Mammary epithelial cell (primary cell): ENCODE measurements at regions of chrX and their contacts with region 1.

Region 1: GRCh38 chrX:18931972-18932371 is 51.9 kb downstream of the PHKA2 start:
- DNase-seq: no peak
- H3K4me3 ChIP-seq: no peak overlapping the region
- H3K27ac ChIP-seq: no peak overlapping the region
- H3K4me1 ChIP-seq: no peaks in the 10 kb centered on the region
- H3K27me3 ChIP-seq: no peaks in the 10 kb centered on the region
- CTCF ChIP-seq: peak; percentile 16 to 21

Region 2: GRCh38 chrX:18963992-18964391 is 32.0 kb after region 1 on chrX:
- CTCF ChIA-PET with region 1: no interaction called
- dilution Hi-C with region 1: no loop called
- in situ Hi-C with region 1: no loop called
- intact Hi-C with region 1: no loop called
- DNase-seq: peak; percentile 8
- H3K4me3 ChIP-seq: no peak overlapping the region
- H3K27ac ChIP-seq: no peak overlapping the region
- H3K4me1 ChIP-seq: no peaks in the 10 kb centered on the region
- H3K27me3 ChIP-seq: no peaks in the 10 kb centered on the region
- CTCF ChIP-seq: no peak

Region 3: DNA sequence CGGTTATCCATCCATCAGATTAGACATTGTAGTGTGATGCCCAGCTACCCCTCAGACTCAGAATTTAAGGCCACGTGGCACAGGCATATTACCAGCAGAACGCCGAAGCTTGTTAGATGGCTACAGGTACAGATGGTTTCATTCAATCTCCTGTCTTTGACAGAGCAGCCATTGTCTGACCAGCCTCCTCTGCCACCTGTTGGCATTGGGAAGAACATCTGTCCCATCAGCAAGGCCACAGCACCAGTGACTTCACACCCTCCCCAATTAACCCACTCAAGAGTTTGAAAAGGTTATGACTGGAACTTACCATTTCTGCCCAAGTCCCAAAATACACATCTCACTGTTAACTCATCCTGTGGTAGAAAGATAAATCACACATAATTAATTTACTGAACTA is 73.9 kb after region 1 on chrX:
- CTCF ChIA-PET with region 1: no interaction called
- dilution Hi-C with region 1: no loop called
- in situ Hi-C with region 1: no loop called
- intact Hi-C with region 1: loop called (anchors 1 kb)
- DNase-seq: no peak
- H3K4me3 ChIP-seq: no peak overlapping the region
- H3K27ac ChIP-seq: no peak overlapping the region
- H3K4me1 ChIP-seq: no peaks in the 10 kb centered on the region
- H3K27me3 ChIP-seq: no peaks in the 10 kb centered on the region
- CTCF ChIP-seq: peak in 1 of 2 donors; percentile 45

Region 4: DNA sequence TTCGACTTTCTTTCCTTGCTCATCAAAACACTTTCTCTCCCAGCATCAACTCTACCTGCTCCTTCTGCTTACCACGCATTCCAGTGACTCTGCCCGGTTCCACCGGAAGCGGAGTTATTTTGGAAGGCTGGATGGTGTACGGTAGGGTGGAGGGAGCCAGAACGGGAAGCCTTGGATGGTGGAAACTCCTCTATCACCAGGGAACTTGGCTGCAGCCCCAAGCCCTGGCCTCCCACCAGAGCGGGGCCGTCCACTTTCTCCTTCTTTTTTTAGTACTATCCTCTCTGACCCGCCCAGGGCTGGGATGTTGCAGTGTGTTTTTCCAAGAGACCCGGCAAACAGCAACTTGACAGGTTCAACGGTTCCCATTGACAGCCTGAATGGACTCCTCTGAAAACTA is 162.7 kb after region 1 on chrX:
- CTCF ChIA-PET with region 1: no interaction called
- dilution Hi-C with region 1: no loop called
- in situ Hi-C with region 1: no loop called
- intact Hi-C with region 1: loop called (anchors 5 kb)
- DNase-seq: no peak
- H3K4me3 ChIP-seq: no peak overlapping the region
- H3K27ac ChIP-seq: no peak overlapping the region
- H3K4me1 ChIP-seq: no peaks in the 10 kb centered on the region
- H3K27me3 ChIP-seq: no peaks in the 10 kb centered on the region
- CTCF ChIP-seq: no peak

Region 5: DNA sequence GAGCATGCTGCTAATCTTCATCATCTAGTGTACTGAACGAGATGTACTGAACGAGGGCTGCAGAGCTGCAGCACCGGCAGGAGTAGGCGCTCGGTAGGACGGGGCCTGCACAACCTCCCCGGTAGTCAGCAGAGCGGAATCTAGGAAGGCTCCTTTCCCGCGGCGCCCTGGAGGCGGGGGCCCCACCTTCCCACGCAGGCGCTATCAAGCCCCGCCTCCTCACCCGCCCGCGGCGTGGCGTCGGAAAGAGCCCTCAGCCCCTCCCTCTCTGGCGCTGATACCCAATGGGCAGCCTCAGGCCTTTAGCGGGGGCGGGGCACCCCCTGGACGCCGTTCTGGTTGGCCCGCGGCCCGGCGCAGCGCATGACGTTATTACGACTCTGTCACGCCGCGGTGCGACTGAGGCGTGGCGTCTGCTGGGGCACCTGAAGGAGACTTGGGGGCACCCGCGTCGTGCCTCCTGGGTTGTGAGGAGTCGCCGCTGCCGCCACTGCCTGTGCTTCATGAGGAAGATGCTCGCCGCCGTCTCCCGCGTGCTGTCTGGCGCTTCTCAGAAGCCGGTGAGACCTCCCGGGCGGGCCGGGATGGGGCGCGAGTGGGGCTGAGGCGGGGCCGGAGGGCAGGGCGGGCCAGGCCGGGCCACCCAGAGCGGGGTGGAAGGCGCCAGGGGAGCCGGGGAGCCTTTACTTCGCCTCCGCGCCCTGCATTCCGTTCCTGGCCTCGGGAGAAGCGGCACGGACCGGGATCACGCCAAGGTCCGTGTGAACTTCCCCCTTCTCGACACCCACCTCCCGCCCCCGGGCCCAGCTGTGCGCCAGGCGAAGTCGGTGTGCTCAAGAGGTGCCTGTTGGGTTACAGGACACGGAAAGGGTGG is 411.8 kb after region 1 on chrX and contains the start of gene PDHA1:
- CTCF ChIA-PET with region 1: no interaction called
- dilution Hi-C with region 1: no loop called
- in situ Hi-C with region 1: loop called in 1 of 2 experiments (anchors 25 kb)
- intact Hi-C with region 1: no loop called
- DNase-seq: peak; percentile 90
- H3K4me3 ChIP-seq: peak within 1 kb of the TSS; percentile 69 to 79 (median 76)
- H3K27ac ChIP-seq: peak within 1 kb of the TSS; percentile 61
- H3K4me1 ChIP-seq: peaks cover 5% of the 10 kb centered on the region
- H3K27me3 ChIP-seq: no peaks in the 10 kb centered on the region
- CTCF ChIP-seq: no peak
- total RNA-seq, gene PDHA1: 48.8 to 176 TPM